ENCODE measurements at regions of chr3 and their contacts with region 1.

Region 1: GRCh38 chr3:73624821-73625665 is at the start of gene PDZRN3:
- DNase-seq: peak; percentile 65 to 81 (median 75)
- ATAC-seq: peak; percentile 25 to 58 (median 56)
- H3K4me3 ChIP-seq: peak within 1 kb of the TSS; percentile 39 to 86 (median 63)
- H3K27ac ChIP-seq: peak within 1 kb of the TSS; percentile 75 to 95 (median 90)
- H3K4me1 ChIP-seq: peaks cover 0 to 46% (median 15%) of the 10 kb centered on the region in 12 donors
- H3K27me3 ChIP-seq: peaks cover 0 to 11% (median 0%) of the 10 kb centered on the region in 9 donors
- CTCF ChIP-seq: no peak
- POLR2A ChIP-seq: peak in 1 of 2 donors; percentile 87
- total RNA-seq, gene PDZRN3: 48.9 to 163 (median 83.1) TPM

Region 2: GRCh38 chr3:73508330-73508954 is 116.6 kb before region 1 on chr3:
- intact Hi-C with region 1: loop called in 8 of 10 experiments (anchors 2 to 5 kb)
- DNase-seq: peak in 2 of 5 donors; percentile 43 to 52
- ATAC-seq: peak; percentile 47 to 72 (median 59)
- H3K4me3 ChIP-seq: no peak overlapping the region
- H3K27ac ChIP-seq: peak overlapping the region in 10 of 12 donors; percentile 6 to 85 (median 48)
- H3K4me1 ChIP-seq: peaks cover 0 to 73% (median 33%) of the 10 kb centered on the region in 12 donors
- H3K27me3 ChIP-seq: no peaks in the 10 kb centered on the region
- CTCF ChIP-seq: peak; percentile 65 to 79 (median 76)
- POLR2A ChIP-seq: no peak

Region 3: GRCh38 chr3:73729969-73730440 is 105.0 kb after region 1 on chr3:
- intact Hi-C with region 1: loop called in 2 of 10 experiments (anchors 10 kb)
- DNase-seq: peak in 1 of 5 donors; percentile 26
- ATAC-seq: peak in 3 of 4 donors; percentile 15 to 39 (median 27)
- H3K4me3 ChIP-seq: no peak overlapping the region
- H3K27ac ChIP-seq: no peak overlapping the region
- H3K4me1 ChIP-seq: peaks cover 0 to 23% (median 3%) of the 10 kb centered on the region in 12 donors
- H3K27me3 ChIP-seq: no peaks in the 10 kb centered on the region
- CTCF ChIP-seq: no peak
- POLR2A ChIP-seq: no peak

Region 4: DNA sequence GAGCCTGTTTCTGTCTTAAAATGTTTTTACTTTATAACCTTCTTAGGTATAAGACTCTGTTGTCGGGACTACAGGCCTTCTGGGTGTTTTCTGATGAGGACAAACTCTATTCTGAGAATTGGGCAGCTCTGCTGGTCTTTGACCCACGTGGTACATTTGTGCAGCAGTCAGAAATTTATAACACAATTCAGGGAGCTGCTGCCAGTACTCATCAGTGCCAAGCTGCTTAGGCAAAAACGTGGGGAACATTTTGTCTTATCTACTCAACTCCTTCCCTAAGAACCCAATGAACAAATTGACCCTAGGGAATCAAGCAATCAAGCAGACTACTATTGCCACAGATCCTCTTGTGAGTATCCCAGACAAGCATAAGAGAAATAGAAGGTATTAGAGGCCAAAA is 180.4 kb after region 1 on chr3:
- intact Hi-C with region 1: loop called in 2 of 10 experiments (anchors 5 to 10 kb)
- DNase-seq: peak in 4 of 5 donors; percentile 54 to 77 (median 58)
- ATAC-seq: peak; percentile 96 to 98 (median 97)
- H3K4me3 ChIP-seq: no peak overlapping the region
- H3K27ac ChIP-seq: peak overlapping the region; percentile 49 to 81 (median 76)
- H3K4me1 ChIP-seq: peaks cover 0 to 19% (median 1%) of the 10 kb centered on the region in 12 donors
- H3K27me3 ChIP-seq: no peaks in the 10 kb centered on the region
- CTCF ChIP-seq: no peak
- POLR2A ChIP-seq: no peak

Region 5: GRCh38 chr3:73848173-73848906 is 223.3 kb after region 1 on chr3:
- intact Hi-C with region 1: loop called in 5 of 10 experiments (anchors 5 kb)
- DNase-seq: no peak
- ATAC-seq: peak in 1 of 4 donors; percentile 58
- H3K4me3 ChIP-seq: no peak overlapping the region
- H3K27ac ChIP-seq: no peak overlapping the region
- H3K4me1 ChIP-seq: peaks cover 0 to 9% (median 0%) of the 10 kb centered on the region in 12 donors
- H3K27me3 ChIP-seq: no peaks in the 10 kb centered on the region
- CTCF ChIP-seq: peak; percentile 47 to 78 (median 66)
- POLR2A ChIP-seq: no peak